HEK293 (cell line): ENCODE measurements at regions of chr3 and their contacts with region 1.

Region 1: DNA sequence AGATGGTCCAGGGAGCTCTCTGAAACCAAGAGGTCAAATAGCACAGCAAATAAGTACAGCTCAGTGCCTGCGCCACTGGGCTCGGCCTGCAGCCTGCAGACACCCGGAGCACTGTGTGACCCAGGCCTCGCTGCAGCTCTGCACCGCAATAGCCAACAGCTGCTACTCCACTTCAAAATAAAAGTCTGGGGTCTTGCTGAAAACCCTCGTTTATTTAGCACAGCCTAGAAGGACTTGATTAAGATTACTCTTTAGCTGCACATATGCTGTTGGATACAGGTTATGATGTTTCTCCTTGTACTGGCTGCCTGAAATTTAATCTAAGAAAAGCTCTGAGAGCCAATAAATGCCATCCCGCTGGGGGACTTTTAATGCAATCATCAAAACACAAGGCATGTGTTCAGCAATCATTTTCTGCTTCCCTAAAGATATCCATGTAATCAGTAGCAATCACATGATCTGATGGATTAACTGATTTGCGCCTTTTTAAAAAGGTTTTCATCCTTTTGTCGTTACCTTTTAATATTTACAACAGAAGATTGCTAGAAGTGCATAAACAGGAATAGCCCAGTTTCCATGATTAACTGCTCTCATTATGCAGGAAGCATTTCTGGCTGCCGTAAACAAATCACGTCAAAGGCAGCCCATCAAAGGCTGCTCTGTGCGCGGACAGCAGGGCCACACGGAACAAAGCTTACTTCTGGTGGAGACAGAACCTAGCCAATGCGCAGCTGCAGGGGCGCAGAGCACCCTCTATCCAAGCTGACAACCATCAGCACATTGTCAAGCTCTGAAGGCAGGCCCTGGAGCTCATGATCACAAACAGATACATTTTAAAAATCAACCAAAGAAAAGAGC is 58.8 kb downstream of the CLASP2 start:
- H3K4me3 ChIP-seq: peak overlapping the region; percentile 34
- H3K27ac ChIP-seq: peak overlapping the region; percentile 50
- H3K4me1 ChIP-seq: no peaks in the 10 kb centered on the region; the same call in 1 of the 2 replicates
- CTCF ChIP-seq: no peak

Region 2: DNA sequence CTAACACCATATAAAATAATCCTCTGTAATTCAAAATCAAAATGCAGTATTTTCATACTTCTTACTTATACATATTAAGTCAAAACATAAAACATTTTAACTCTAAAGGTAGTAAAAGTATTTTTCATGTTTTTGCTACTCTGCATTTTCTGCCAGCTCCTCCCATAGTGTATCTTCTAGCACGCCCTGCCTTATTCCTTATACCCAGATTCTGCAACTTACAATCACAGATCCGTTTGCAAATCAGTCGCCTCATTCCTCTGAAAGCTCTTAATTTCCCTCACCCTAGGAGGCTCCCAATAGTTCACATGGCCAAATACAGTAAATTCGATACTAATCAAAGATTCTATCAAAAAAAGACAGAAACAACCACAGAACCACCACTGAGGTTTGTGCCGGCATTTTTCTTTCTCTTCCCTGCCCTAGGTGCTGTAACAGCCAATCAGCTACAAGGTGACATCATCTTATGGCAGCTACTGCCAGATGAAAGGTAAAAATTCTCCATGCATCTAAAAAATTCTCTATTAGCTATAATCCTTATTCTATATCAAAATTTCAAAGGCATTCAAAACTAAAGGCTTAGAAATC is 14.1 kb before region 1 on chr3:
- CTCF ChIA-PET with region 1: interaction called, 4 read pairs
- POLR2A ChIA-PET with region 1: interaction called, 16 read pairs
- H3K4me3 ChIP-seq: peak overlapping the region; percentile 57
- H3K27ac ChIP-seq: no peak overlapping the region
- H3K4me1 ChIP-seq: no peaks in the 10 kb centered on the region
- CTCF ChIP-seq: no peak